K562 (cell line): ENCODE measurements at regions of chr19 and their contacts with region 1.

Region 1: GRCh38 chr19:5967994-5968430 is 9.9 kb downstream of the RANBP3 start:
- DNase-seq: peak; percentile 68 to 79 (median 74)
- ATAC-seq: peak; percentile 85
- H3K4me3 ChIP-seq: no peak overlapping the region
- H3K27ac ChIP-seq: peak overlapping the region; percentile 51
- H3K4me1 ChIP-seq: peaks cover 26 to 28% of the 10 kb centered on the region in 2 experiments
- H3K27me3 ChIP-seq: no peaks in the 10 kb centered on the region
- CTCF ChIP-seq: peak; percentile 81 to 92 (median 87)
- EP300 ChIP-seq: peak; percentile 58; the same call in 1 of the 2 replicates
- POLR2A ChIP-seq: no peak
- RAD21 ChIP-seq: peak; percentile 44 to 70; a peak in 3 of 4 replicates

Region 2: DNA sequence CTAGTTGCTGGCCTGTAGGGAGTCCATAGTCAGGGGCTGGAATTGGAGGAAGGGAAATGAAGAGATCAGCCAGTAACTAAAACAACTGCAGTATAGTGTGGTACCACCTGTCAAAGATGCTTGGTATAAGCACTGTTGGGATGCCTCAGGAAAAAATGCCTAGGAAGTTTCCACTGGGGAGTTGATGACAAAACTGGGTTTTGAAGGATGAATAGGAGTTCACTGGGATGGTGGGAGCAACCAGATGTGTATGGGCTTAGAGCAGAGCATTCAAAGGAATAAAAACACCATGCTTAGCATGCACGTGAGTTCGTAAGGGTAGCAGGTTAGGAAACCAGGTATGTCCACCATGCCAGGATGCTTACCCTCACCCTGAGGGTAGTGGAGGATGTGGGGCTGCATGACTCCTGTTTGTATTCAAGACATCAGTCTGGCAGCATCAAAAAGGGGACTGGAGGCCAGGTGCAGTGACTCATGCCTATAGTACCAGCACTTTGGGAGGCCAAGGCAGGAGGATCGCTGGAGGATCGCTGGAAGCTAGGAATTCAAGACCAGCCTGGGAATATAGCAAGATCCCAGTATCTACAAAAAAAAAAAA is 240.5 kb before region 1 on chr19:
- CTCF ChIA-PET with region 1: no interaction called
- POLR2A ChIA-PET with region 1: no interaction called
- in situ Hi-C with region 1: no loop called
- intact Hi-C with region 1: no loop called
- DNase-seq: no peak
- ATAC-seq: no peak
- H3K4me3 ChIP-seq: no peak overlapping the region
- H3K27ac ChIP-seq: no peak overlapping the region
- H3K4me1 ChIP-seq: no peaks in the 10 kb centered on the region
- H3K27me3 ChIP-seq: peaks cover 0 to 5% of the 10 kb centered on the region in 2 experiments; a peak in 1 of 5 replicates
- CTCF ChIP-seq: no peak
- EP300 ChIP-seq: no peak
- POLR2A ChIP-seq: no peak
- RAD21 ChIP-seq: no peak

Region 3: DNA sequence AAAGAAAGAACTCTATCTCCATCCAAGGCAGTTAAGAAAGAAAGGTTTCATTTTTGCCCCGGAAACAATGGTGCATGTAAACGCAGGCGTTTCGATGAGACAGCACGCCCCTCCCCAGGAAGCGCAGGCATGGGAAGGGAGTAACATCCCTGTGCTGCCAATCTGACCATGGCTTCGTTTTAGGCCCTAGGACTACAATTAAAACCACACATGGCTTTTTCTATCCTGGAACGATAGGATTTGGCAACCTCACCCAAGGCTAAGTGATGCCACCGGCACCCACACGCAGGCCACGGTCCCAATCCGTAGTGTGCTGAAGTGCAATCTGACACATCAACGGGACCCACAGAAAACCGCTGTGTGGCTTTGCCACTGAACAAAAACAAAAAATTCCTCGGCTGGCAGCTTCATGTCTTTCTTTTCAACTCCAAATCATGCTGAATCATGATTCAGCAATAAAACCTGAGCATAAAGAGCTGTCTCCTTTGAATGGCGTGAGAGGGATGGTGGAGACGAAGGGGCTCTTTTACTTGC is 14.3 kb before region 1 on chr19:
- CTCF ChIA-PET with region 1: no interaction called
- POLR2A ChIA-PET with region 1: interaction called, 41 read pairs
- in situ Hi-C with region 1: no loop called
- intact Hi-C with region 1: no loop called
- DNase-seq: peak; percentile 41 to 60 (median 46)
- ATAC-seq: peak; percentile 65
- H3K4me3 ChIP-seq: peak overlapping the region; percentile 1; the same call in 1 of the 2 replicates
- H3K27ac ChIP-seq: peak overlapping the region; percentile 70
- H3K4me1 ChIP-seq: peaks cover 43 to 46% of the 10 kb centered on the region in 2 experiments
- H3K27me3 ChIP-seq: no peaks in the 10 kb centered on the region
- CTCF ChIP-seq: no peak
- EP300 ChIP-seq: no peak
- POLR2A ChIP-seq: no peak
- RAD21 ChIP-seq: no peak